CD4-positive, alpha-beta T cell (primary cell): ENCODE measurements at regions of chr22 and their contacts with region 1.

Region 1: DNA sequence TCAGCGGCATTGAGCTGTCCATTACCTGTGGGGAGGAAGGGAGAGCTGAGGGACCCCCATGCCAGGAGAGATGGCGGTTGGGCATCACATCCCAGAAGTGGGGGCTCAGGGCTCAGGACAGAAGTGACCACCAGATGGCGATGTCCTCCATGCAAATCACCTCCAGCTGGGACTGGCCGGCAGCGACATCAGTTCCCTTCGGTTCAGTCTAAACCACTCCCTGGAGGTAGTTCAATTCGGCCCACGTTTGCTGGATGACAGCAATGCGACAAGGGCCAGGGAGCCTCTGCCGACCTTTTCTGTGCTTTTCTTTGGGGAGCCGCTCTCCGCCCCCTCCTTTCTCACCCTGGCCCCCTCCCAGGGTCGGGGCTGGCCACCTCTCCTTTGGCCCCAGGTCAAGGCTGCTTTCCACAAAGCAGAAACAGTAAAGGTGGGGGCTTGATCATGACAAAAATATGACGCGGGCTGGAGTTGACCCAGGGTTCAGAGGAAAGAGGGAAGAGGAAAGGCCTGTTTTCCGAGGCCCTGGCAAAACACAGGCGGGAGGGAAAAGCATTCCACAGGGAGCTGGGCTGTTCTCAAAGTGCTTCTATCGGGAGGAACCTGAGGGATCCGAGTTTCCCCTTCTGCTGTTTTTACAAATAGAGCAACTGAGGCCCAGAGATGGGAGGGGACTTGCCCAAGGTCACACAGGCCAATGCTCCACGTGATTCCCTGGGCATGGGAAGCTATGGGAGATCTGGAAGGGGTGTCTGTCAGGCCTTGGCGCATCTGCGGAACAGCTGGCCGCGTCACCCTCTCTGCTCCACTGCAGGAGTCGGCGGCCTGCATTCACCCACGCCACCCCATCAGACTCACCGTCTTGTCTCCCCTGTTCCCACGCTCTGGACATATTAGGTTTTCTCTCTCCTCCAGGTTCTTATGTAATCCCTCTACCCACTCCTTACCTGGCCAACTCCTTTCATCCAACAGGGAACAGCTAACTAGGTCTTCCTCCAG is 54.7 kb downstream of the FBXO7 start:
- DNase-seq: peak; percentile 38 to 79 (median 51)
- ATAC-seq: peak; percentile 39
- H3K4me3 ChIP-seq: no peak overlapping the region
- H3K4me3 Mint-ChIP-seq: no peak overlapping the region
- H3K27ac ChIP-seq: no peak overlapping the region
- H3K27ac Mint-ChIP-seq: no peak overlapping the region
- H3K4me1 ChIP-seq: peaks cover 4% of the 10 kb centered on the region
- H3K4me1 Mint-ChIP-seq: no peaks in the 10 kb centered on the region
- H3K27me3 ChIP-seq: peaks cover 0 to 8% of the 10 kb centered on the region in 2 experiments
- H3K27me3 Mint-ChIP-seq: peaks cover 7% of the 10 kb centered on the region
- CTCF ChIP-seq: peak; percentile 63

Region 2: GRCh38 chr22:32457031-32457430 is 72.3 kb before region 1 on chr22:
- CTCF ChIA-PET with region 1: no interaction called
- POLR2A ChIA-PET with region 1: no interaction called
- intact Hi-C with region 1: no loop called
- DNase-seq: no peak
- ATAC-seq: no peak
- H3K4me3 ChIP-seq: no peak overlapping the region
- H3K4me3 Mint-ChIP-seq: no peak overlapping the region
- H3K27ac ChIP-seq: no peak overlapping the region
- H3K27ac Mint-ChIP-seq: no peak overlapping the region
- H3K4me1 ChIP-seq: no peaks in the 10 kb centered on the region
- H3K4me1 Mint-ChIP-seq: no peaks in the 10 kb centered on the region
- H3K27me3 ChIP-seq: peaks cover 18 to 26% of the 10 kb centered on the region in 2 experiments
- H3K27me3 Mint-ChIP-seq: peaks cover 66% of the 10 kb centered on the region
- CTCF ChIP-seq: no peak

Region 3: DNA sequence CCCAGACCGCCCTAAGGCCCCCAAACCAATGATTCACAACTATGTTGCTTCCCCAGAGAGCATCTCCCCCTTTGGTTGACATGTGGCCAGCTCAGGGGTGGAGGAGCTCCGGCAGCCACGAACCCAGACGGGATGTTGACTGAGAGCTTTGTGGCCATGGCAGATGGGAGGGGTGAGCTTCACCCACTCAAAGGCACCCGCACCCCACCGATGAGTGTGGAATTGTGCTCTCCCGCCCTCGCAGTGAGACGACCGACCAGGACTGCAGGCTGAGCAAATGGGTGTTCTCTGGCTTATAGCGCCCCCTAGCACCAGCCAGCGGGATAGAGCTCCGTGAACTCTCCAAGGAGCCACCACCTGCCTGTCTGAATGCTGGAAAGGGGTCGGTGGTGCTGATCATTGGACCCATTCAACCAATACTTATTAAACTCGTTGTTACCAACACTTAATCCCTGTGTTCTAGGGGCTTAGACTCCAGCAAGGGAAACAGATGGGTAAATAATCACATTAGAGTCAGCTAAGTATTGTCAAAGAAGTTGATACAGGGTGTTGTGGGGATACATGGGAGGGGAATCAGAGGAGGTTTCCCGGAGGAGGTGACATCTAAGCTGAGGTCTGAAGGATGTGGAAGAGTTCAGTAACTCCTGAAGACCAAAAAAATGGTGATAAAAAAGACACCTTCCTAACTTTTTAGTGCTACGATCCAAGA is 267.7 kb after region 1 on chr22:
- CTCF ChIA-PET with region 1: interaction called, 21 read pairs
- POLR2A ChIA-PET with region 1: no interaction called
- intact Hi-C with region 1: loop called (anchors 1 kb)
- DNase-seq: peak; percentile 25 to 76 (median 42)
- ATAC-seq: peak; percentile 62
- H3K4me3 ChIP-seq: no peak overlapping the region
- H3K4me3 Mint-ChIP-seq: no peak overlapping the region
- H3K27ac ChIP-seq: no peak overlapping the region
- H3K27ac Mint-ChIP-seq: no peak overlapping the region
- H3K4me1 ChIP-seq: peaks cover 10% of the 10 kb centered on the region
- H3K4me1 Mint-ChIP-seq: no peaks in the 10 kb centered on the region
- H3K27me3 ChIP-seq: peaks cover 14 to 27% of the 10 kb centered on the region in 2 experiments
- H3K27me3 Mint-ChIP-seq: peaks cover 37% of the 10 kb centered on the region
- CTCF ChIP-seq: peak; percentile 71

Region 4: DNA sequence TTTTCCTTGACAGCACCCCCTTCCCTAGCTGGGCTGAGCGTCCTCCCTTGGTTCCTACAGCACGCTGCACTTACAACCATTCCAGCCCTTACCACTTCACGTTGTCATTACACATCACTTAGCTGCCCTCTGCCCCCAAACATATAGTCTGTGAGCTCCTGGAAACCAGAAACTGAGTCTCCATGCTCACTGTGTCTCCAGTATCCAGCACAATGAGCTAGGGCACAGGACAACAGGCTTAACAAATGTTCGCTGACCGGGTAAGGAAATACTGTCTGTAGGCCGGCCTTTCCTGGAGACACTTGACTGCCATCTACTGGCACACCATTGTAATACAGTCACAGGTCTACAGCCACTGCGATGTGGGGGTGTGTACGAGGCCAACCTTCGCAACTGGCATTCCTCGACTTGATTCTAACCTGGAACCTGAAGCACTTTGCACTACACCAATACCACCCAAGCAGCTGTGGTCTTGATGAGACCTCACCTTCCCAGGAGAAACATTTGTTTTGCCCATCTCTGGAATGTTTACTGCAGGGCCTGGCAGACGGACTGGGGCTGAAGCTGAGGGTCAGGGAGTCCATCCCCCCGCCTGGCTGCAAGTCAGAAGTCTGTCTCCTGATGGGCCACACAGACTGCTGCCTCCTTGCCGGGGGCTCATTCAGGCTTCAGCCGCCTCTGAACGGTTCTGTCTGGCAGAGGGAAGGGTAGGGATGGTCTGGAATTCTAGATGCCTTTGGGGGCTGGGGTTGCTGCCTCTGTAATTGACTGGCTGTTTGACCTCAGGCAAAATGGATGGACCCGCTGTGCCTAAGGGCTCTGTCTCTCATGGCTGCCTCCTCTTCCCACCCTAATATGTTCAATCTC is 456.8 kb after region 1 on chr22:
- CTCF ChIA-PET with region 1: no interaction called
- POLR2A ChIA-PET with region 1: no interaction called
- intact Hi-C with region 1: loop called in 1 of 2 experiments (anchors 5 kb)
- DNase-seq: peak in 13 of 14 experiments; percentile 1 to 59 (median 13)
- ATAC-seq: no peak
- H3K4me3 ChIP-seq: no peak overlapping the region
- H3K4me3 Mint-ChIP-seq: no peak overlapping the region
- H3K27ac ChIP-seq: no peak overlapping the region
- H3K27ac Mint-ChIP-seq: no peak overlapping the region
- H3K4me1 ChIP-seq: peaks cover 5% of the 10 kb centered on the region
- H3K4me1 Mint-ChIP-seq: no peaks in the 10 kb centered on the region
- H3K27me3 ChIP-seq: peaks cover 0 to 3% of the 10 kb centered on the region in 2 experiments
- H3K27me3 Mint-ChIP-seq: peaks cover 4% of the 10 kb centered on the region
- CTCF ChIP-seq: peak; percentile 55

Region 5: DNA sequence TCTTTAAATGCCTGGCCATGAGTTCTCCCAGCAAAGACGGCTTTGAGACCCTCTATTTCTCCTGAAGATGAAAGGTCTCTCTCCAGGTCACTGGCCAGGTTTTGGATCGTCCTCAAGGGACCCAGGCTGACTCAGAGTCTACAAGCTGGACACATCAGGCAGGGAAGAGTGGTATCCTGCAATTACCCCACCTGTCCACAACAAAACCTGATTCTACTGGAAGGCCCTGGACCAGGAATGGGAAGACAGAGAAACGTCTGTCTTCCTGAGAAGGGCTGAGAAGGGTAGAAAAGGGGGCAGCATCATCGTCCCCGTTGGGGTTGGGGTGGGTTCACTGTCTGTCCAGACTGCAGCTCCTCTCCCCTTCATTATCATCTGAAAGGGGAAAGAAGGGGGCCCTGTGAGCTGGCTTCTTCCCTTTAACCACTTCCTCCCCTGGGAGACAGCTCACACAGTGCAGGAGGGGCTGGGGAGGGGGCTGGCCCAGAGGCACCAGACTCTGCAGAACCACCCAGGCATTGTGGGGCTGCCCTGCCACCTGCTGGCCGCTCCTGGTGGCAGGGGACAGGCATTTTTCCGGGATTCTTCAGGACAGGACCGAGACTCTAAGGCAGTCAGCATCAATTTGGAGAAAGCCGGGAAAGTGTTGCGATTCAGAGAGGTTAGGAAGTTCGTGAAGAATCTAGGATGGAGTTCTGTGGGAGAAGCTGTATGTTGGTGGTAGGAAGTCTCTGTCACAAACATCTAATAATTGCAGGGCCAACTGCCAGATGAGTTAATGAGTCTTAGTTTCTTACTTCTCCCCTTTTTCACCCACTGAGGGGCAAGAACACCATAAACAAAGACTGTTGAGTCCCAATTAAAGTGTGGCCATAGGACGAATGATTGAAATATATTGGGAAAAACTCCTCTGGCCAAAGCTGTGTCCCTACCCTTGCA is 471.3 kb after region 1 on chr22:
- CTCF ChIA-PET with region 1: no interaction called
- POLR2A ChIA-PET with region 1: no interaction called
- intact Hi-C with region 1: loop called in 1 of 2 experiments (anchors 1 kb)
- DNase-seq: peak in 10 of 14 experiments; percentile 3 to 41 (median 14)
- ATAC-seq: no peak
- H3K4me3 ChIP-seq: no peak overlapping the region
- H3K4me3 Mint-ChIP-seq: no peak overlapping the region
- H3K27ac ChIP-seq: no peak overlapping the region
- H3K27ac Mint-ChIP-seq: no peak overlapping the region
- H3K4me1 ChIP-seq: no peaks in the 10 kb centered on the region
- H3K4me1 Mint-ChIP-seq: no peaks in the 10 kb centered on the region
- H3K27me3 ChIP-seq: no peaks in the 10 kb centered on the region
- H3K27me3 Mint-ChIP-seq: peaks cover 9% of the 10 kb centered on the region
- CTCF ChIP-seq: peak; percentile 69

Region 6: DNA sequence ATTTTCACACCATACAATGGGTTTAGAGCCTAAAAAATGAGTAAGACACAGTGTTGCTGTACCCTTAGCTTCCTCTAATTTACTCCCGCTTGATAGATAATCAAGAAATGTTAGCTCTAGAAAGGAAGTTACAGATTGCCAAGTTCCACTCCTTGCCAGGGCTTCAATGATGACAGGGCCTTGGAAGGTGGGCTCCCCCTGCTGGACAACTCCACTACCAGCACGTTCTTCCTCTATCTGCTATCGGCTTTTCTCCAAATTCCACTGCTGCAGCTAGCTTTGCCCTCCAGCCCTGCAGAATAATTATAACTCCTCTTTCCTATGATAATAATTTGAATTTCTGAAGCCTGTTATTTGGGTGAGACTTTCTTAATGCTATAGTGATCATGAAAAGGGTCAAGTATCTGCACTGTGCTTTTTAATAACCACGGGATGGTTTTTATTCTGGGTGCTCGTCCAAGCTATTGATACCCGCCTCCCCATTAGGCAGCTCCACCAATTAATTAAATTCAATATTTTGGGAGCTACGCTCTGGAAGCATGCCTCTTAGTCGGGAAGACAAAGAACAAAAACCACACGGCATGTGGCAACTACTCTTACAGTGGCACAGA is 519.9 kb after region 1 on chr22:
- CTCF ChIA-PET with region 1: no interaction called
- POLR2A ChIA-PET with region 1: no interaction called
- intact Hi-C with region 1: loop called in 1 of 2 experiments (anchors 2 kb)
- DNase-seq: peak; percentile 16 to 69 (median 39)
- ATAC-seq: no peak
- H3K4me3 ChIP-seq: no peak overlapping the region
- H3K4me3 Mint-ChIP-seq: no peak overlapping the region
- H3K27ac ChIP-seq: no peak overlapping the region
- H3K27ac Mint-ChIP-seq: no peak overlapping the region
- H3K4me1 ChIP-seq: no peaks in the 10 kb centered on the region
- H3K4me1 Mint-ChIP-seq: no peaks in the 10 kb centered on the region
- H3K27me3 ChIP-seq: peaks cover 7 to 23% of the 10 kb centered on the region in 2 experiments
- H3K27me3 Mint-ChIP-seq: peaks cover 40% of the 10 kb centered on the region
- CTCF ChIP-seq: peak; percentile 90